ENCODE measurements at regions of chr5 and their contacts with region 1.

Region 1: GRCh38 chr5:144203750-144204596 is 33.3 kb downstream of the KCTD16 start:
- DNase-seq: peak; percentile 27 to 42
- H3K4me3 ChIP-seq: no peak overlapping the region
- H3K27ac ChIP-seq: no peak overlapping the region
- H3K4me1 ChIP-seq: peaks cover 3% of the 10 kb centered on the region
- H3K27me3 ChIP-seq: peaks cover 40% of the 10 kb centered on the region
- CTCF ChIP-seq: peak; percentile 93

Region 2: GRCh38 chr5:144177548-144177947 is 26.4 kb before region 1 on chr5:
- CTCF ChIA-PET with region 1: no interaction called
- POLR2A ChIA-PET with region 1: no interaction called
- intact Hi-C with region 1: no loop called
- DNase-seq: no peak
- H3K4me3 ChIP-seq: no peak overlapping the region
- H3K27ac ChIP-seq: no peak overlapping the region
- H3K4me1 ChIP-seq: no peaks in the 10 kb centered on the region
- H3K27me3 ChIP-seq: no peaks in the 10 kb centered on the region
- CTCF ChIP-seq: no peak

Region 3: GRCh38 chr5:145237843-145238242 is 1033.9 kb after region 1 on chr5:
- CTCF ChIA-PET with region 1: no interaction called
- POLR2A ChIA-PET with region 1: no interaction called
- intact Hi-C with region 1: loop called (anchors 10 kb)
- DNase-seq: peak in 1 of 2 experiments; percentile 37
- H3K4me3 ChIP-seq: no peak overlapping the region
- H3K27ac ChIP-seq: no peak overlapping the region
- H3K4me1 ChIP-seq: no peaks in the 10 kb centered on the region
- H3K27me3 ChIP-seq: no peaks in the 10 kb centered on the region
- CTCF ChIP-seq: peak; percentile 77

Region 4: DNA sequence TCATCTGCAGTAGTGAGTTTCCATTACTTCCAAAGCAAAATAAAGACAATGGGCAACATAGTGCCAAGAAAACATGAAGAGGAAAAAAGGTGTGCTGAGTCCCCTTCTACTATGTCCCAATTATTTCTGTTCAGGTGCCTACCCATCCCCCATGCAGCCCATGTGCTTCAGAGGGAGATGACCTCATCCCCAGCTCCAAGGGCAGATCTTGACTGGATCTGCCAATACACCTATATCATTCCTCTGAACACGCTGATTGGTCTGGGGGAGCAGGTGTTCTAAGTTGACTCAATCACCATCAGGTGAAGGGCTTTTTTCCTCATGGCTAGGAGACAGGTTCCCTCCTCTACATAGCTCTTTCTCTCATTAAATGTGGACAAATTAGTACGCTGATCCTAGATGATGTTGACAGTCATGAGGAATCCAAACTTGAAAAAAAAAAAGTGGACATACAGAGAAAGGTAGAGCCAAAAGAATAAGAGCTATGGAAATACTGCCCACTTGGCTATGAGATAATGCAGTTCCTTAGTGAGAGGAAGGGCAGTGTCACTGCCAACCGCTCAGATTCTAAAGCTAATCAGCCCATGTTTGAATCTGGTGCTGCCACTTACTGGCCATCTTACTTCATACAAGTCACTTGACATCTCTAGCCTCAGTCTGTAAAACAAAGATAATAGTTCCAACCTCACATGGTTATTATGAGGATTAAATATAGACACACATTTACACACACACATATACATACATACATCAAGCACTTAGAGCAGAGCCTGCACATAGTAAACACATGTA is 1608.1 kb after region 1 on chr5:
- CTCF ChIA-PET with region 1: no interaction called
- POLR2A ChIA-PET with region 1: no interaction called
- intact Hi-C with region 1: loop called (anchors 5 kb)
- DNase-seq: no peak
- H3K4me3 ChIP-seq: no peak overlapping the region
- H3K27ac ChIP-seq: no peak overlapping the region
- H3K4me1 ChIP-seq: no peaks in the 10 kb centered on the region
- H3K27me3 ChIP-seq: no peaks in the 10 kb centered on the region
- CTCF ChIP-seq: no peak

Region 5: GRCh38 chr5:145887976-145888574 is 1684.1 kb after region 1 on chr5:
- CTCF ChIA-PET with region 1: no interaction called
- POLR2A ChIA-PET with region 1: no interaction called
- intact Hi-C with region 1: loop called (anchors 2 kb)
- DNase-seq: peak; percentile 49 to 55
- H3K4me3 ChIP-seq: no peak overlapping the region
- H3K27ac ChIP-seq: no peak overlapping the region
- H3K4me1 ChIP-seq: no peaks in the 10 kb centered on the region
- H3K27me3 ChIP-seq: no peaks in the 10 kb centered on the region
- CTCF ChIP-seq: peak; percentile 80

Region 6: GRCh38 chr5:146130440-146131045 is 1926.6 kb after region 1 on chr5:
- CTCF ChIA-PET with region 1: no interaction called
- POLR2A ChIA-PET with region 1: no interaction called
- intact Hi-C with region 1: loop called (anchors 2 kb)
- DNase-seq: no peak
- H3K4me3 ChIP-seq: no peak overlapping the region
- H3K27ac ChIP-seq: no peak overlapping the region
- H3K4me1 ChIP-seq: no peaks in the 10 kb centered on the region
- H3K27me3 ChIP-seq: no peaks in the 10 kb centered on the region
- CTCF ChIP-seq: peak; percentile 85